OCI-LY7 (cell line): ENCODE measurements at regions of chr18 and their contacts with region 1.

Region 1: GRCh38 chr18:2547477-2548087 is 23.7 kb downstream of the METTL4 start:
- DNase-seq: peak; percentile 80
- H3K4me3 ChIP-seq: no peak overlapping the region
- H3K27ac ChIP-seq: no peak overlapping the region
- H3K4me1 ChIP-seq: peaks cover 12% of the 10 kb centered on the region
- CTCF ChIP-seq: peak; percentile 94

Region 2: DNA sequence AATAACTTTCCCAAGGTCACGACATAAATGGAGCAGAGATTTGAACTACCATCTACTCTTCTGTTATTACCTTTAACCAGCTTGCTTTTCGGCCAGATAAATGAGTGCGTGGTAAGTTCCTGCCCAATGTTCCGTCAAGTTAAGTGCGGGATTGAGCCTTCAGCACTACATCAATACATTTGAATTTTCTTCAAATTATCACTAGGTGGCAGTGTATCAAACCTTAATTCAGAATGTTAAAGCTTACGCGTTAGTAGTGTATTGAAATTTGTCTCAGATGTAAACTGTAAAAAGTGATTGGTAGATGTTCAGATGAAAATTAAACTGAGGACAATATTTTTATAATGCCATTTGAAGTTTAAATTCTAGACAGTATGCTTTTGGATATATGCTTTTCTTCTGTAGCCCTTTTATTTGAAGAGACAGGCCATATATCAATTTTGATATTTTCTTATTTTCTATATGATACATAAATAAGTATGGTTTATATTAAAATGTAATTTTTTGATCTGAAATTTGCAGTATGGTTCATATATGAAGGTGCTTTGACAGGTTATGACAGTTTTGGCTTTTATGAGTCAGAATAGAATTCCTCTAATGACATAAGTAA is 961.6 kb before region 1 on chr18:
- CTCF ChIA-PET with region 1: no interaction called
- POLR2A ChIA-PET with region 1: no interaction called
- intact Hi-C with region 1: loop called (anchors 5 kb)
- DNase-seq: peak; percentile 38
- H3K4me3 ChIP-seq: no peak overlapping the region
- H3K27ac ChIP-seq: no peak overlapping the region
- H3K4me1 ChIP-seq: no peaks in the 10 kb centered on the region
- CTCF ChIP-seq: peak; percentile 82

Region 3: DNA sequence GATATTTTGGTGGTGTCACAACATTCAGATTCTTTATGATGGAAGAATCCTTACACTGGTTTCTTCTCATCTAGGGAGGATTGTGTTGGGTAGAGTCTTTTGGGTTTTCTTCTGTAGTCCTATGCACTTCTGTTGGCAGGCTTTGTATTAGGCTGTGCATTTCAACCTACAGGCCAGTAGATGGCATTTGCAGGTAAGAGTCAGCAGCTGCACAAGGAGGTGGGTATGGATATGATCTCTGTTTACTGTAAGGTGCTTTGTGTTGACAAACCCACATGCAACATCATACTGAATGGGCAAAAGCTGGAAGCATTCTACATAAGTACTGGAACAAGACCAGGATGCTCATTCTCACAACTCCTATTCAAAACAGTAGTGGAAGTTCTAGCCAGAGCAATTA is 633.1 kb before region 1 on chr18:
- CTCF ChIA-PET with region 1: no interaction called
- POLR2A ChIA-PET with region 1: no interaction called
- intact Hi-C with region 1: loop called (anchors 10 kb)
- DNase-seq: peak; percentile 43
- H3K4me3 ChIP-seq: no peak overlapping the region
- H3K27ac ChIP-seq: no peak overlapping the region
- H3K4me1 ChIP-seq: no peaks in the 10 kb centered on the region
- CTCF ChIP-seq: peak; percentile 78

Region 4: GRCh38 chr18:2104620-2105462 is 442.7 kb before region 1 on chr18:
- CTCF ChIA-PET with region 1: interaction called, 3 read pairs
- POLR2A ChIA-PET with region 1: interaction called, 4 read pairs
- intact Hi-C with region 1: loop called (anchors 1 kb)
- DNase-seq: peak; percentile 69
- H3K4me3 ChIP-seq: no peak overlapping the region
- H3K27ac ChIP-seq: no peak overlapping the region
- H3K4me1 ChIP-seq: no peaks in the 10 kb centered on the region
- CTCF ChIP-seq: peak; percentile 89

Region 5: DNA sequence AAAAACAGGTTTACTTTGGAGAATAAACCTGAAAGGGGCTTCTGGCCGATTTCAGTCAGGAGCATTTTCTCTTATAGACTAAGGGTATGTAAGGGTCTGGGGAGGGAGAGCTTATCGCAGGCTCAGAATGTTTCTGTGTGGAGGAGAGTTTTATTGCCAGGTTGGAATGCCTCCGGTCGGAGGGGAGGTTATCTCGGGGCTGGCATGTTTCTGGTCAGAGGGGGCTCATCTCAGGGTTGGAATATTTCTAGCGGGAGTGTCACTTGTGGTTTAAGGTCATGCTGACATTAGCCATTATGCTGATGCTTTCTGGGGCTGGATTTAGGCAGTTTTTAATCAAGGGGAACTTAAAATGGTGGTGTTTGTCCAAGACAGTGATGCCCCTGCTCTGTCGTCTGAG is 309.9 kb before region 1 on chr18:
- CTCF ChIA-PET with region 1: no interaction called
- POLR2A ChIA-PET with region 1: no interaction called
- intact Hi-C with region 1: loop called (anchors 10 kb)
- DNase-seq: no peak
- H3K4me3 ChIP-seq: no peak overlapping the region
- H3K27ac ChIP-seq: no peak overlapping the region
- H3K4me1 ChIP-seq: no peaks in the 10 kb centered on the region
- CTCF ChIP-seq: no peak

Region 6: GRCh38 chr18:2337552-2338141 is 209.9 kb before region 1 on chr18:
- CTCF ChIA-PET with region 1: no interaction called
- POLR2A ChIA-PET with region 1: interaction called, 4 read pairs
- intact Hi-C with region 1: loop called (anchors 1 kb)
- DNase-seq: peak; percentile 63
- H3K4me3 ChIP-seq: no peak overlapping the region
- H3K27ac ChIP-seq: no peak overlapping the region
- H3K4me1 ChIP-seq: peaks cover 4% of the 10 kb centered on the region
- CTCF ChIP-seq: peak; percentile 83

Region 7: GRCh38 chr18:2497797-2498196 is 49.8 kb before region 1 on chr18:
- CTCF ChIA-PET with region 1: no interaction called
- POLR2A ChIA-PET with region 1: no interaction called
- intact Hi-C with region 1: no loop called
- DNase-seq: no peak
- H3K4me3 ChIP-seq: no peak overlapping the region
- H3K27ac ChIP-seq: no peak overlapping the region
- H3K4me1 ChIP-seq: no peaks in the 10 kb centered on the region
- CTCF ChIP-seq: no peak